Activated T-helper 1 cell treated with anti-CD3 and anti-CD28 coated beads, Interleukin-12 subunit alpha, Interleukin-12 subunit beta, Interleukin-2, Interleukin-4 antibody, amounts not matched to agents 30 ng/mL and 10 ng/mL and 1 ng/mL, durations not matched to agents 14 hours and 24 hours and 36 hours (primary cell): ENCODE measurements at regions of chr6 and their contacts with region 1.

Region 1: DNA sequence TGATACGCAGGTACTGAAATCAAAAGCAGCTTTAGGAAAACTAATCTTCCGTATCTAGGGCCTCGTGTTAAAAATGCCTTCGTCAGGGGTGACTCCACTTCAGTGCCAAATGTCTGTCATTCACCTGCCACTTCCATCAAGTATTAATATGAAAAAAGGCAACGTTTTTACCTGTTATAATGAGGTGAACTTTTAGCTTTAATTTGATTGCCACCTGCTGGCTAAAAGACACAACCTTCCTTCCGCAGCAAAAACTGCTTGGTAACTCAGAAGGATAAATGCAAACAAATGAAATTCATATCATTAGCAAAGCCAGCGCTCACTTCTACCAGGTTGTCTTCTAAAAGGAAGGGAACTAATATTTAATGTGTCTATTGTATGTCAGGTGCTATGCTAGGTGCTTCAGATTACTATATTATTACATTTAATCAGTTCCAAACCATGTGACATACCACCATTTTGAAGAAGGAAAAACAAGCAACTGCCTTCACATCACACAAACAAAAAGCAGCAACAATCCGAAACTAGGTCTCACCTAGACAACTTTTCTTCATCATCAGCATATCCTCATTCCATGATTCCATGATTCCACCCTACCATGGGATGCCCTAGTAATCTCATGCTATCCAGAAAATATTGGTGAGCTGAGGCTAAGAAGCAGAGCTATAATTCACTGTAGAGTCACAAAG is 20.6 kb upstream of the ARHGAP18 start:
- DNase-seq: no peak
- H3K4me3 Mint-ChIP-seq: no peak overlapping the region
- H3K27ac Mint-ChIP-seq: peak overlapping the region; percentile 29
- H3K4me1 Mint-ChIP-seq: peaks cover 15% of the 10 kb centered on the region
- H3K27me3 Mint-ChIP-seq: peaks cover 4% of the 10 kb centered on the region

Region 2: GRCh38 chr6:129543981-129544380 is 186.6 kb before region 1 on chr6:
- intact Hi-C with region 1: no loop called
- DNase-seq: no peak
- H3K4me3 Mint-ChIP-seq: no peak overlapping the region
- H3K27ac Mint-ChIP-seq: no peak overlapping the region
- H3K4me1 Mint-ChIP-seq: no peaks in the 10 kb centered on the region
- H3K27me3 Mint-ChIP-seq: peaks cover 1% of the 10 kb centered on the region

Region 3: GRCh38 chr6:129621247-129621646 is 109.4 kb before region 1 on chr6:
- intact Hi-C with region 1: loop called (anchors 1 kb)
- DNase-seq: no peak
- H3K4me3 Mint-ChIP-seq: no peak overlapping the region
- H3K27ac Mint-ChIP-seq: no peak overlapping the region
- H3K4me1 Mint-ChIP-seq: no peaks in the 10 kb centered on the region
- H3K27me3 Mint-ChIP-seq: no peaks in the 10 kb centered on the region

Region 4: GRCh38 chr6:129683601-129684322 is 46.9 kb before region 1 on chr6:
- intact Hi-C with region 1: no loop called
- DNase-seq: peak; percentile 55
- H3K4me3 Mint-ChIP-seq: peak overlapping the region; percentile 47
- H3K27ac Mint-ChIP-seq: peak overlapping the region; percentile 77
- H3K4me1 Mint-ChIP-seq: peaks cover 63% of the 10 kb centered on the region
- H3K27me3 Mint-ChIP-seq: no peaks in the 10 kb centered on the region